Activated T-helper 1 cell treated with anti-CD3 and anti-CD28 coated beads, Interleukin-12 subunit alpha, Interleukin-12 subunit beta, Interleukin-2, Interleukin-4 antibody, amounts not matched to agents 30 ng/mL and 10 ng/mL and 1 ng/mL, durations not matched to agents 14 hours and 24 hours and 36 hours (primary cell): ENCODE measurements at regions of chr2 and their contacts with region 1.

Region 1: GRCh38 chr2:38690499-38691294 is 24.8 kb downstream of the GALM start:
- DNase-seq: no peak
- H3K4me3 Mint-ChIP-seq: no peak overlapping the region
- H3K27ac Mint-ChIP-seq: peak overlapping the region; percentile 89
- H3K4me1 Mint-ChIP-seq: peaks cover 49% of the 10 kb centered on the region
- H3K27me3 Mint-ChIP-seq: no peaks in the 10 kb centered on the region

Region 2: DNA sequence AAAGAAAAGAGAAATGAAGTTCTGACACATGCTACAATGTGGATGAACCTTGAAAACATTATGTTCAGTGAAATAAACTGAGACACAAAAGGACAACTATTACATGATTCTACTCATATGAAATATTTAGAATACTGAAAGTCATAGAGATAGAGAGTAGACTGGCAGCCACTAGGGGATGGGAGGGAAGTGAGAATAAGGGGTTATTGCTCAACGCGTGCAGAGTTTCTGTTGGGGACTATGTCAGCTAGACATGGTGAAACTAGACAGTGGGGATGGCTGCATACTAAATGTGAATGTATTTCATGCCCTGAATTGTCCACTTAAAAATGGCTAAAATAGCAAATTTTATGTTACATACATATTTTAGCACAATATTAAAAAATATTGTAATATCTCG is 205.0 kb before region 1 on chr2:
- intact Hi-C with region 1: no loop called
- DNase-seq: no peak
- H3K4me3 Mint-ChIP-seq: no peak overlapping the region
- H3K27ac Mint-ChIP-seq: no peak overlapping the region
- H3K4me1 Mint-ChIP-seq: no peaks in the 10 kb centered on the region
- H3K27me3 Mint-ChIP-seq: peaks cover 4% of the 10 kb centered on the region

Region 3: DNA sequence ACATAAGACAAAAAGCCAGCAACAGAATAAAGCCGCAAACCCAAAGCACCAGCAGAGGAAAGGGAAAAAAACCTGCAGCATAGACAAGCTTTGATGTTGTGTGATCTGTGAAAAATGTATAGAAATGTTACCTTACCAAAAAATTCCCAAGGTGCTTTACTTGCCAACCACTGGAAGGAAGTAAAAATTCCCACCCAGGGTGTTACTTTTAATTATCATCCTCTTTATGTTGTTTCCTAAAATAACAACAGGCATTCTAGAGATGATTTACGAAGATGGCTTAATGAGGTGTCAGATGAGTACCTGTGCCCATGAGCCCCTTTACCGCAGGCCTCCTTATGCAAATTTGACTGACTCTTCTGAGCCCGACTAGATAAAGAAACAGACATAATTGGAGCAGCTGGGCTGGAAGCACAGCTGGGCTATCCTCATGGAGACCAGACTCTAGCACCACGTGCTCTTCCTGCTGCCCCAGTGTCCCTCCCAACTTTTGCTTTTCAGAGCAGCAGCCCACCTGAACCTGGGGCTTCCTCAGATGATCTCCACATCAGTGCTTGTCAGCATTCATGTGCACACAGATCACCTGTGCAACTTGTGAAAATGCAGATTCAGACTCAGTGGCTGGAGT is 19.0 kb after region 1 on chr2:
- intact Hi-C with region 1: loop called (anchors 2 kb)
- DNase-seq: peak; percentile 29
- H3K4me3 Mint-ChIP-seq: peak overlapping the region; percentile 66
- H3K27ac Mint-ChIP-seq: peak overlapping the region; percentile 95
- H3K4me1 Mint-ChIP-seq: peaks cover 77% of the 10 kb centered on the region
- H3K27me3 Mint-ChIP-seq: no peaks in the 10 kb centered on the region